Activated CD4-positive, alpha-beta T cell treated with anti-CD3 and anti-CD28 coated beads, Interleukin-2, amount 10 ng/mL, durations not matched to agents 24 days and 14 days (primary cell): ENCODE measurements at regions of chrX and their contacts with region 1.

Region 1: GRCh38 chrX:44872817-44873414 is at the start of gene KDM6A:
- DNase-seq: peak; percentile 98
- H3K4me3 Mint-ChIP-seq: peak within 1 kb of the TSS; percentile 95
- H3K27ac Mint-ChIP-seq: peak within 1 kb of the TSS; percentile 99
- H3K4me1 Mint-ChIP-seq: peaks cover 6% of the 10 kb centered on the region
- H3K27me3 Mint-ChIP-seq: no peaks in the 10 kb centered on the region
- total RNA-seq, gene KDM6A: 24.2 and 26.2 TPM in 2 replicates

Region 2: GRCh38 chrX:43958529-43958928 is 914.4 kb before region 1 on chrX:
- intact Hi-C with region 1: loop called (anchors 5 kb)
- DNase-seq: peak; percentile 71
- H3K4me3 Mint-ChIP-seq: no peak overlapping the region
- H3K27ac Mint-ChIP-seq: peak overlapping the region; percentile 20
- H3K4me1 Mint-ChIP-seq: peaks cover 5% of the 10 kb centered on the region
- H3K27me3 Mint-ChIP-seq: peaks cover 4% of the 10 kb centered on the region

Region 3: DNA sequence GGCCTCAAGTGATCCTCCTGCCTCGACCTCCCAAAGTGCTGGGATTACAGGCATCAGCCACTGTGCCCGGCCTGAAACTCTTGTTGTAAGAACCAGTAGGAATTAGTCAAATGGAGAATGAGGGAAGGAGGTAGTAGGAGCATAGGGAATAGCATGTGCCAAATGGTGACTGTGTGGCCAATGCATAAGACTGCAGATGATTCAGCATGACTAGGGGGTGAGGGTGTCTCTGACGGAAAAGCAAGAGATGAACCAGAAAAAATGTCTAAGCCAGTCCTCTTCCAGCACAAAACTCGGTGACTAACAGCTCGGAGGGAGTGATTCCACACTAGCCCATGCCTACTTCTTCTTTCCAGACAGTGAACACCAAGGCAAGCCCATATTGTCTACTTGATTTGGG is 87.3 kb before region 1 on chrX:
- intact Hi-C with region 1: no loop called
- DNase-seq: no peak
- H3K4me3 Mint-ChIP-seq: no peak overlapping the region
- H3K27ac Mint-ChIP-seq: no peak overlapping the region
- H3K4me1 Mint-ChIP-seq: no peaks in the 10 kb centered on the region
- H3K27me3 Mint-ChIP-seq: no peaks in the 10 kb centered on the region

Region 4: DNA sequence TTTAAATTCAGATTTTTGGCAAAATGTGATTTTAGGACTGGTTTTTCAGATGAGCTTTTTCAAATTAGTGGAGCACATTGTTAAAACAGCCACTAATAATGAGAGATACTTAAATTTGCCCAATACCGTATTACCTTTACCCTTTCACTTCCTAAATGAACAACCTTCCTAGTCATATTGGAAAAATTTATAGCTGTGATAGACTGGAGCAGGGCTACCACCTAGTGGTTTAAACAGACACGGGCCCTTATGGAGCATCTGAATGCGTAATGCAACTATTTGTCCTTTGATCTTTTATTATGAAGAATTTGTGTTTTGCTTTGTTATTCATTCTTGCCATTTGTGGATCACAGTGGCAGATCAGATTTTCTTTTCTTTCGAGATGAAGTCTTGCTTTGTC is 72.8 kb after region 1 on chrX:
- intact Hi-C with region 1: loop called (anchors 5 kb)
- DNase-seq: no peak
- H3K4me3 Mint-ChIP-seq: no peak overlapping the region
- H3K27ac Mint-ChIP-seq: no peak overlapping the region
- H3K4me1 Mint-ChIP-seq: peaks cover 13% of the 10 kb centered on the region
- H3K27me3 Mint-ChIP-seq: no peaks in the 10 kb centered on the region

Region 5: GRCh38 chrX:45077748-45078424 is 205.0 kb after region 1 on chrX:
- intact Hi-C with region 1: loop called (anchors 5 kb)
- DNase-seq: peak; percentile 59
- H3K4me3 Mint-ChIP-seq: peak overlapping the region; percentile 84
- H3K27ac Mint-ChIP-seq: peak overlapping the region; percentile 84
- H3K4me1 Mint-ChIP-seq: peaks cover 22% of the 10 kb centered on the region
- H3K27me3 Mint-ChIP-seq: no peaks in the 10 kb centered on the region

Region 6: DNA sequence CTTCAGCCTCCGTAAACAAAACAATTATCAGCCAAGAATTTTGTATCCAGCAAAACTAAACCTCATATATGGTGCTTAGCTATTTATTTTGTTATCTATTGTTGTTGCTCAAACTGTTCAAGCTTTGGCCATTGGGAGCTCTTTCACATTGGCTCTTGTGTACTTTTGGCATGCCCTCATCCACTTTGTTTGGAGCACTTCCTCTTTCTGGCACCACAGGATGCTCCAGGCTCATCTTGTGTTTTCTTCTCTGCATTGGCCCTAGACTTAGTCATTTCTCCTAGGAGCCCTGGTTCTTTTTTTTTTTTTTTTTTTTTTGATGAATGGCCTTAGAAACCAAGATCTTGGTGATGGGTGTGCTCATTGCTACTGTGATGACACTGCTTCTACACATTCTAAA is 253.2 kb after region 1 on chrX:
- intact Hi-C with region 1: no loop called
- DNase-seq: no peak
- H3K4me3 Mint-ChIP-seq: no peak overlapping the region
- H3K27ac Mint-ChIP-seq: no peak overlapping the region
- H3K4me1 Mint-ChIP-seq: no peaks in the 10 kb centered on the region
- H3K27me3 Mint-ChIP-seq: peaks cover 1% of the 10 kb centered on the region

Region 7: DNA sequence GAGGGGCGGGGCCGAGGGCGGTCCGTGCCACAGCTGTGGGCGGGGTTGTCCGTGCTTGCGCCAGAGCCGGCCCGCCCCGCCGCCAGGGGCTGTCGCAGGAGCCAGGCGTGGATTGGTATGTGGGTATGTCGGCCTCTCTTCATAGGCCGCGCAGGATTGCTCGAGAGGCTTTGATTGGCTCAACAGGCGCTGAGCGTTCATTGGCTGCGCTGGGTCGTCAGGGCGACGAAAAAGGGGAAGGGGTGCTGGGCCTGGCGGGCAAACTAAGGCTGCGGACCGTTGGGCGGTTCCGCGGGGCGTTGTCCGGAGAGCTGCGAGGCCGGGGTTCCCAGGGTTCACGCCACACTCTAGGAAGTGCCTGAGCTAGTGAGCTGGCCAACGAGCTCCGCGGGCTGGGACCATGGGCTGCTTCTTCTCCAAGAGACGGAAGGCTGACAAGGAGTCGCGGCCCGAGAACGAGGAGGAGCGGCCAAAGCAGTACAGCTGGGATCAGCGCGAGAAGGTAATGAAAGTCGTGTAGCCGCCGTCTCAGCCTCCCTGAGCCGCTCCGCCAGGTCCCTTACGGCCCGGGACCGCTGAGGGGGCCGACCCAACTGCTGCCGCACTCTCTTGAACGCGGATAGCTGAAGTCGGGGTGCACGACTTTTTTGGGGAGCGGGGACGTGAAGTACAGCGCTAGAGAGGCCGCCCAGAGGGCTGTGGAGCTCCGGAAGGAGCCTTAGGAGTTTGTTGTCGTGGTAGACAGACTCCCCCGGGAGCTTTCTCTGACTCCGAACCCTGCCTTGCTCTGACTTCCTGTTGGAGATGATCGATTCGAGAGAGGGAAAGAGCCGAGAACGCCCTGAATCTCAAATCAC is 1964.0 kb after region 1 on chrX and contains the start of gene RP2:
- intact Hi-C with region 1: loop called (anchors 5 kb)
- DNase-seq: peak; percentile 95
- H3K4me3 Mint-ChIP-seq: peak within 1 kb of the TSS; percentile 98
- H3K27ac Mint-ChIP-seq: peak within 1 kb of the TSS; percentile 95
- H3K4me1 Mint-ChIP-seq: peaks cover 6% of the 10 kb centered on the region
- H3K27me3 Mint-ChIP-seq: peaks cover 6% of the 10 kb centered on the region
- total RNA-seq, gene RP2: 6.3 and 7.6 TPM in 2 replicates